BJ (cell line): ENCODE measurements at regions of chr16 and their contacts with region 1.

Region 1: GRCh38 chr16:58494981-58495520 is 4.9 kb upstream of the NDRG4 start:
- DNase-seq: peak; percentile 75
- H3K4me3 ChIP-seq: no peak overlapping the region
- H3K27me3 ChIP-seq: peaks cover 6% of the 10 kb centered on the region; the same call in 1 of the 2 replicates
- CTCF ChIP-seq: peak; percentile 77

Region 2: DNA sequence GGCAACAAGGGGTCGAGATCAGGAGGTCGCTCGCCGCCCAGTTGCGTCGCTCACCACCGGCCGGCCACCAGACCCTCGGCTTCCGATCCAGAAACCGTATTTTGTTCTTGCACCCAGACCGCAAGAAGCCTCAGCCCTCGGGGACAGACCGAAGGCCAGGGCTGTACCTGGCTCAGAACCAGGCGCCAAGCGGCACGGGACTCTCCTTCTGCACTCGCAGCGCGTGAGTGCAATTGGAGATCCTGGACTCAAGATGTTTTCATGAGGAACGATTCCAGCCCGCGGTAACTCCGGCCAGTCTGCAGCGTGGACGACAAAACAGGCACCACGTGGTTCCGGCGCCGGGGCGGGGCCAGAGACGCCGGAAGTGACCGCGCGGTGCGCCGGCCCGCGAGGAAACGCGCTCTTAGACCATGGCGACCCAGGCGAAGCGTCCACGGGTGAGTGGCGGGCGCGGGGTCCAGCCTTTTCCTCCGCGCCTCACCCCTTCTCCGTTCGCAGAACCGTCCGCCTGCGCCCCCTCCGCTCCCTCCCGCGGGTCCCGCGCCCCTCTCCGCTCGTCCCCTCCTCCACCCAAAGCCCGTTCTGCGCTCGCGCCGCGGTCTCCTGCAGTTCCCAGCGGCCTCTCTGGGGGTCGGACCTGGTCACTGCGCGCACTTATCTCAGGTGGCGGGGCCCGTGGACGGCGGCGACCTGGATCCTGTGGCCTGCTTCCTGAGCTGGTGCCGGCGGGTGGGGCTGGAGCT is 20.2 kb after region 1 on chr16 and contains the start of gene SETD6:
- CTCF ChIA-PET with region 1: interaction called, 15 read pairs
- POLR2A ChIA-PET with region 1: no interaction called
- DNase-seq: peak; percentile 41
- H3K4me3 ChIP-seq: peak within 1 kb of the TSS; percentile 56
- H3K27me3 ChIP-seq: no peaks in the 10 kb centered on the region
- CTCF ChIP-seq: peak; percentile 28
- polyA plus RNA-seq, gene SETD6: 7.4 and 8.2 TPM in 2 replicates

Region 3: GRCh38 chr16:58589326-58589905 is 94.4 kb after region 1 on chr16:
- CTCF ChIA-PET with region 1: no interaction called
- POLR2A ChIA-PET with region 1: no interaction called
- DNase-seq: no peak
- H3K4me3 ChIP-seq: no peak overlapping the region
- H3K27me3 ChIP-seq: no peaks in the 10 kb centered on the region
- CTCF ChIP-seq: no peak

Region 4: DNA sequence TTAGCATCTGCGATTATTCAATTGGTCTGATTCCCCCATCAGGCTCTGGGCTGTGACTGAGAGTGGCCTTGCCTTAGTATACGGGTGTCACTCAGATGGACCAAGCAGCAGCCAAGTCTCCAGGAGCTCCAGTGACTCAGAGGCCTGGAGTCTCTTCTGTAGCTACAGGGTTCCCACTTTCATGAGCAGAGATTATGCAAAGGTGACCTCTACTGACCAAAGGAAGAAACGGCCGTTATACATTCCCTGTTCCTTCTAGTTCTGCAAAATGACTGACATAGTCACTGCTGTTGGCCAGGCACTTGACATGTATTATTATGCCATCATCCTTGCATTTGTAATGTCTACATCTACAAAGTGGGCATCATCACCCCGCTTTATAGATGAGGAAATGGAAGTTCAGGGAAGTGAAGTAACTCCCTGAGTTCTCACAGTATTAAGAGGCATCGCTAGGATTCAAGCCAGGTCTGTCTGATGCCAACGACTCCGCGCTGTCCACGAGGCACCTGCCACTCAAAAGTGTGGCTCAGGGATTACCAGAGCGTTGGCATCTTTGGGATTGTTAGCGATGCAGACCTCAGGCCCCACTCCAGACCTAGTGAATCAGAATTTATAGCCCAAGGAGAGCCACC is 166.3 kb after region 1 on chr16:
- CTCF ChIA-PET with region 1: interaction called, 11 read pairs
- POLR2A ChIA-PET with region 1: interaction called, 3 read pairs
- DNase-seq: peak; percentile 46
- H3K4me3 ChIP-seq: no peak overlapping the region
- H3K27me3 ChIP-seq: no peaks in the 10 kb centered on the region
- CTCF ChIP-seq: peak; percentile 70